ENCODE measurements at regions of chr7 and their contacts with region 1.

Region 1: DNA sequence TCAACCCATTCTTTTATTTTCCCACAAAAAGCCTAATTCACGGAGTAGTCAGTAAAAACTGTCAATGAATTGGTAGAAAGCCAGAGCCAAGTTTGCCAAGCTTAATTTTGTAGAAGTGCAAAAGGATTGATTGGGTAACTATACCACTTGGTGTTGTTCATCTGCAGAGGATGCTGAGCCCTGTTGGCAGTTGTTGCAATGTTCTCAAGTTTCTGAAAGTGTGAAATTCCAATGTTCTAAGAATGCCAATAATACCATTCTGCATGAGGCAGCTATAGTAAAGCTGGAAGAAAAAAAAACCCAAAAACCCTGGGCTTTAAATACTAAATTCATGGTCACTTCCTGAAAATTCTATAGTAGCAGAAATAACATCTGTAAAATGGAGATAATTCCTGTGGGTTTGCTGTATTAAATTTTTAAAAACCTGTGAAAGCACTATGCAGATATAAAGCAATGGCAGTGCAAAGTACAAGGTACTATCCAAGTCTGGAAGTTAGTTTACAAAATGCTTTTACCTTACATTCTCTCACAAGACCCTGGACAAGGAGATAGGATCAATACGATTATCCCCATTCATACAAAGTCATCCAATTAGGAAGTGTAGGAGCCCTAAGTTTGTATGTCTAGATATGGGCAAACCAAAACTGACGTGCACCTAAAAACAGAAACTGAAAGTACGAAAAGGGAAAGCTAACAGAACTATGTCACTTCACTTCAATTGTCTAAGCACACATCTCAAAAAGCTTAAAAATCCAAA is 6.0 kb upstream of the PON1 start:
- DNase-seq: peak in 5 of 9 donors; percentile 18 to 35 (median 31)
- ATAC-seq: peak; percentile 62
- H3K4me3 ChIP-seq: peak overlapping the region; percentile 52
- H3K4me3 Mint-ChIP-seq: peak overlapping the region; percentile 60 to 93 (median 82)
- H3K27ac ChIP-seq: peak overlapping the region; percentile 30
- H3K27ac Mint-ChIP-seq: peak overlapping the region; percentile 52 to 87 (median 78)
- H3K4me1 ChIP-seq: peaks cover 4 to 5% of the 10 kb centered on the region in 2 donors
- H3K4me1 Mint-ChIP-seq: peaks cover 10 to 22% (median 13%) of the 10 kb centered on the region in 7 donors
- H3K27me3 ChIP-seq: no peaks in the 10 kb centered on the region
- H3K27me3 Mint-ChIP-seq: peaks cover 3 to 16% (median 8%) of the 10 kb centered on the region in 5 donors

Region 2: DNA sequence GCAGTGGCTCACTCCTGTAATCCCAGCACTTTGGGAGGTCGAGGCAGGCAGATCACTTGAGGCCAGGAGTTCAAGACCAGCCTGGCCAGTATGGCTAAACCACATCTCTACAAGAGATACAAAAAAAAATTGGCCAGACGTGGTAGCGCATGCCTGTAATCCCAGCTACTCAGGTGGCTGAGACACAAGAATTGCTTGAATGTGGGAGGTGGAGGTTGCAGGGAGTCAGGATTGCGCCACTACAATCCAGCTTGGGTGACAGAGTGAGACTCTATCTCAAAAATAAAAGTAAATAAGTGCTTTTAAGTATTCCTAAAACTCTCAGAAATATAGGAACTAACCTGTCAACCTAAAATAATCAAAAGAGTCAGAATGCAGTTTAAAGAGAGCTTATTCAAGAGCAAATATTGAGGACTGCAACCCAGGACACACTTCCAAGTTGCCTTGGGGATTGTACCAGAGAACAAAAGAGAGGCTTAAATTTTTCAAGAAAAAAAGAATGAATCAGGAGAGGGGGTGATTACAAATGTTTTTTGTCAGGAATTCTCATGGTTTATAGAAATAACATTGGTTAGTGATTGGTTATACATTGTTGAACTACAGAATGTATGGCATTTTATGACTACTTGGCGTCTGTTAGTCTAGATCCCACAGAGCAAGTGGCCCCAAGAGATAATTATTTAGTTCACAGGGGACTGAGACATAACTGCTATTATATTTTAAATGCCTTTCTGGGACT is 456.2 kb before region 1 on chr7:
- CTCF ChIA-PET with region 1: no interaction called
- POLR2A ChIA-PET with region 1: no interaction called
- intact Hi-C with region 1: no loop called
- DNase-seq: no peak
- ATAC-seq: no peak
- H3K4me3 ChIP-seq: no peak overlapping the region
- H3K4me3 Mint-ChIP-seq: no peak overlapping the region
- H3K27ac ChIP-seq: no peak overlapping the region
- H3K27ac Mint-ChIP-seq: no peak overlapping the region
- H3K4me1 ChIP-seq: no peaks in the 10 kb centered on the region
- H3K4me1 Mint-ChIP-seq: no peaks in the 10 kb centered on the region
- H3K27me3 ChIP-seq: no peaks in the 10 kb centered on the region
- H3K27me3 Mint-ChIP-seq: peaks cover 0 to 18% (median 3%) of the 10 kb centered on the region in 5 donors

Region 3: GRCh38 chr7:95342642-95343307 is 12.4 kb after region 1 on chr7:
- CTCF ChIA-PET with region 1: no interaction called
- POLR2A ChIA-PET with region 1: no interaction called
- intact Hi-C with region 1: no loop called
- DNase-seq: no peak
- ATAC-seq: no peak
- H3K4me3 ChIP-seq: no peak overlapping the region
- H3K4me3 Mint-ChIP-seq: no peak overlapping the region
- H3K27ac ChIP-seq: no peak overlapping the region
- H3K27ac Mint-ChIP-seq: no peak overlapping the region
- H3K4me1 ChIP-seq: no peaks in the 10 kb centered on the region
- H3K4me1 Mint-ChIP-seq: no peaks in the 10 kb centered on the region
- H3K27me3 ChIP-seq: no peaks in the 10 kb centered on the region
- H3K27me3 Mint-ChIP-seq: peaks cover 0 to 10% (median 2%) of the 10 kb centered on the region in 5 donors

Region 4: DNA sequence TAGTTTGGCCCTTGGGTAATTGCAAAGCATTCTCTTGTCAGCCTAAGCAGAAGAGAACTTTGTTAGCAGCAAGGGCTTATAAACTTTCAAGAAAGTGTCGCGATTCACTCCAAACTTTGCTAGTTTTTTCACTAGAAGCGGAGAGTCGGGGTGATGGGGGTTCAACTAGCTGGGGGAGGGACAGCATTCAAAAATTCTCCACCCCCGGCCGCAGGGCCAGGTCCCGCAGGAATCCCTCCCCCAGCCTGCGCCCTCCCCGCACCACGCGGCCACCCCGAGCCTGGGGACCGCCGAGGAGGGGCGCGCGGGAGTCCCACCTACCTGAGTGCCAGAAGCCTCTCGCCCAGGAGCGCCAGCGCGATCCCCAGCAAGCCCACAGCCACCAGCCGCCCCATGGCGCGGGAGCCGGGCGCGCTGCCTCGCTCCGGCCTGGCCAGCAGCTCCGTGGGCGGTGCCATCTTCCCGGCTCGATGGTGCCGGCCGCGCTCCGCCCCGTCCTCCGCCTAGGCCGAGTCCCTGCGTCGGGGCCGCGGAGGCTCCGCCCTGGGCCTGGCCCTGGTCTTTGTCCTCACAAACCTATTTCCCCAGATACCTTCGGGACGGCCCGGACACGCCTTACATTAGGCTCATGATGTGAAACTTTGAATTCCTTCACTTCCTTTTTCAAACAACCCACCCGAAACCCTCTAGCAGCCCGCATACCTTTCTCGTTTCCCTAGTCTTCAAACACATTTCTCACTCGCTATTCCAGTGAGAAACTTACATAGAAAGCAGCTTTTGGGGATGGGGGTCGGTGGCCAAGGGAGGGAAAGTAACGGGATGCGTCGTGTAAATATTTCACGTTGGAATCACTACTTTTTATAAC is 104.4 kb after region 1 on chr7 and contains the start of gene PON2:
- CTCF ChIA-PET with region 1: no interaction called
- POLR2A ChIA-PET with region 1: no interaction called
- intact Hi-C with region 1: loop called in 1 of 2 experiments (anchors 5 kb)
- DNase-seq: peak; percentile 7 to 56 (median 41)
- ATAC-seq: peak; percentile 90
- H3K4me3 ChIP-seq: peak within 1 kb of the TSS; percentile 55
- H3K4me3 Mint-ChIP-seq: peak within 1 kb of the TSS; percentile 84 to 98 (median 90)
- H3K27ac ChIP-seq: peak within 1 kb of the TSS; percentile 60
- H3K27ac Mint-ChIP-seq: peak within 1 kb of the TSS; percentile 66 to 95 (median 88)
- H3K4me1 ChIP-seq: peaks cover 0 to 3% of the 10 kb centered on the region in 2 donors
- H3K4me1 Mint-ChIP-seq: peaks cover 3 to 18% (median 17%) of the 10 kb centered on the region in 7 donors
- H3K27me3 ChIP-seq: no peaks in the 10 kb centered on the region
- H3K27me3 Mint-ChIP-seq: peaks cover 0 to 17% (median 3%) of the 10 kb centered on the region in 5 donors
- total RNA-seq, gene PON2: 2.9 to 11.3 (median 8.3) TPM